Activated CD8-positive, alpha-beta T cell treated with anti-CD3 and anti-CD28 coated beads for 36 hours (primary cell): ENCODE measurements at regions of chr19 and their contacts with region 1.

Region 1: GRCh38 chr19:47790398-47790814 is 11.9 kb downstream of the SELENOW start:
- DNase-seq: peak; percentile 90
- ATAC-seq: peak; percentile 86
- H3K4me3 Mint-ChIP-seq: no peak overlapping the region
- H3K27ac Mint-ChIP-seq: no peak overlapping the region
- H3K4me1 Mint-ChIP-seq: peaks cover 5% of the 10 kb centered on the region
- H3K27me3 Mint-ChIP-seq: peaks cover 1% of the 10 kb centered on the region
- CTCF ChIP-seq: peak; percentile 97

Region 2: DNA sequence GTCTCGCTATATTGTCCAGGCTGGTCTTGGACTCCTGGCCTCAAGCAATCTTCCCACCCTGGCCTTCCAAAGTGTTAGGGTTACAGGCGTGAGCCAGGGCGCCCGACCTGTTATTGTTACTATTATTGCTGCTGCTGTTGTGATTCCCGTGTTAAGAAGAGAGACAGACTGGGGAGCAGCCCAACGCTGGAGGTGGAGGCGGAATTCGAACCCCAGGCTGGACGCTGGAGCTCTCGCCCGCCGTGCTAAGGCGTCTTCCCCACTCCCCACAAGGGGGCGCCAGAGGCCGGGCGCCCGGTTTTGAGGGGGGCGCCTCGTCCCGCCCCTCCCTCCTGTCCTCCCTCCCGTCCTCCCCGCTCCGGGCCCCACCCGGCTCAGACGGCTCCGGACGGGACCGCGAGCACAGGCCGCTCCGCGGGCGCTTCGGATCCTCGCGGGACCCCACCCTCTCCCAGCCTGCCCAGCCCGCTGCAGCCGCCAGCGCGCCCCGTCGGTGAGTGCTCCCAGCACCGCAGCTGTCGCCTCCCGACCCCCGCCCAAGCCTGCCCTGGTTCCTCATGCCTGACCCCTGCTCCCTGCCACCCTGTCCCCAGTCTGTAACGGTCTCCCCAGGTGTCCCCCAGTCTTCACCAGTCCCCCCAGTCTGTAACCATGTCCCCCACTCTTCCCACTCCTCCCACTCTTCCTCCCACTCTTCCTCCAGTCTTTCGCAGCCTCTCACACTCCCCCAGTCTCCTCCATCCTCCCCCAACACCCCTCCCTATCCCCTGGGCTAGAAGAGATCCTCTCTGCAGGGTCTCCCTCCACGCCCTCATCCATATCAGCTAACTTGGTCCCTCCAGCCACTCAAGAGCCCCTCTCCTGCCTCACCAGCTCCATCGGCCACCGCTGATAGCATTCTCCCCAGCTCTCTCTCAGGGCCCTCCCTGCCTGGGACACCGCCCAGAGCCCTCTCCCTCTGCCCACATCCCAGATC is 77.1 kb before region 1 on chr19 and contains the start of gene EHD2:
- CTCF ChIA-PET with region 1: interaction called, 14 read pairs
- POLR2A ChIA-PET with region 1: no interaction called
- intact Hi-C with region 1: no loop called
- DNase-seq: peak; percentile 57
- ATAC-seq: peak; percentile 88
- H3K4me3 Mint-ChIP-seq: peak within 1 kb of the TSS; percentile 16
- H3K27ac Mint-ChIP-seq: no peak within 1 kb of the TSS
- H3K4me1 Mint-ChIP-seq: peaks cover 2% of the 10 kb centered on the region
- H3K27me3 Mint-ChIP-seq: peaks cover 32% of the 10 kb centered on the region
- CTCF ChIP-seq: peak; percentile 94
- total RNA-seq, gene EHD2: 1.1 to 1.4 TPM

Region 3: GRCh38 chr19:47765523-47766358 is 24.7 kb before region 1 on chr19:
- CTCF ChIA-PET with region 1: interaction called, 15 read pairs
- POLR2A ChIA-PET with region 1: interaction called, 3 read pairs
- intact Hi-C with region 1: no loop called
- DNase-seq: peak; percentile 61
- ATAC-seq: peak; percentile 69
- H3K4me3 Mint-ChIP-seq: no peak overlapping the region
- H3K27ac Mint-ChIP-seq: no peak overlapping the region
- H3K4me1 Mint-ChIP-seq: peaks cover 3% of the 10 kb centered on the region
- H3K27me3 Mint-ChIP-seq: no peaks in the 10 kb centered on the region
- CTCF ChIP-seq: peak; percentile 54

Region 4: GRCh38 chr19:47824396-47824795 is 34.0 kb after region 1 on chr19:
- CTCF ChIA-PET with region 1: no interaction called
- POLR2A ChIA-PET with region 1: no interaction called
- intact Hi-C with region 1: no loop called
- DNase-seq: no peak
- ATAC-seq: no peak
- H3K4me3 Mint-ChIP-seq: no peak overlapping the region
- H3K27ac Mint-ChIP-seq: no peak overlapping the region
- H3K4me1 Mint-ChIP-seq: no peaks in the 10 kb centered on the region
- H3K27me3 Mint-ChIP-seq: peaks cover 13% of the 10 kb centered on the region
- CTCF ChIP-seq: no peak

Region 5: DNA sequence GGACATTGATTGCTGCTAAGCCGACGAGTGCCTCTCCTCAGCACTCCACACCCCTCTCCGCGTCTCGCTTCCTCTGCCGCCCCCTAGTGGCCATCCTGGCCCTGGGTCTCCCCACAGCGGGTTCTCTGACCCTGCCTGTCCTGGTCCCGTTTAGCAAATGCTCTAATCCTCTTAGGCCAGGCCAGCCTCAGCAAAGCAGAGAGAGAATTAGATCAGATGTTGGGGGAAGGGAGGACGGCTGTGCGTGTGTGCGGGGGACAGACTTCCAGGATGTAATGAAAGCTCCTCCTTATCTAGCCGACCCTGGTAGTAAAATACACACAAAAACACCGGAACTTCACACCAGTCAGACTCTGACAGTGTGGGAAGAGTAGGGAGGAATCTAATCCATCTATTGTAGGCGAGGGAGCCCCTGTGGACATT is 73.1 kb after region 1 on chr19:
- CTCF ChIA-PET with region 1: interaction called, 11 read pairs
- POLR2A ChIA-PET with region 1: no interaction called
- intact Hi-C with region 1: no loop called
- DNase-seq: peak; percentile 88
- ATAC-seq: peak; percentile 98
- H3K4me3 Mint-ChIP-seq: no peak overlapping the region
- H3K27ac Mint-ChIP-seq: no peak overlapping the region
- H3K4me1 Mint-ChIP-seq: no peaks in the 10 kb centered on the region
- H3K27me3 Mint-ChIP-seq: peaks cover 14% of the 10 kb centered on the region
- CTCF ChIP-seq: peak; percentile 96